Motor neuron (in vitro differentiated cells): ENCODE measurements at regions of chr12 and their contacts with region 1.

Region 1: GRCh38 chr12:55619354-55620138 is 17.1 kb upstream of the OR10P1 start:
- ATAC-seq: peak; percentile 94 to 99 (median 98)
- H3K4me3 ChIP-seq: no peak overlapping the region
- H3K27ac ChIP-seq: no peak overlapping the region
- H3K4me1 ChIP-seq: no peaks in the 10 kb centered on the region

Region 2: GRCh38 chr12:55188974-55189556 is 430.5 kb before region 1 on chr12:
- in situ Hi-C with region 1: loop called in 5 of 9 experiments (anchors 10 to 25 kb)
- ATAC-seq: peak; percentile 57 to 92 (median 75)
- H3K4me3 ChIP-seq: no peak overlapping the region
- H3K27ac ChIP-seq: no peak overlapping the region
- H3K4me1 ChIP-seq: no peaks in the 10 kb centered on the region

Region 3: DNA sequence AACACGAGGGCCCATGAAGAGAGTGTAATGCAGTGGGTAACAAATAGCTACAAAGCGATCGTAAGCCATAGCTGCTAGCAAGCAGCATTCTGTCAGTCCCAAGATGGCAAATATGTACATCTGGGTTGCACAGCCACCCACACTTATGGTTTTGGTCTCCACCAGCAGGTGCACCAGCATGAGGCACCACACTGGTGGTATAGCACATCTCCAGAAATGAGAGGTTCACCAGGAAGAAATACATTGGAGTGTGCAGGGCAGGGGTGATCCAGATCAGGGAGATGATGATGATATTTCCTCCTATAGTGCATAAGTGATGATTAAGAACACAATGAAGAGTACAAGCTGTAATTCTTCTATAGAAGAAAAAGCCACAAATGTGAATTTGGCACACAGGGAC is 425.2 kb before region 1 on chr12:
- in situ Hi-C with region 1: loop called in 5 of 9 experiments (anchors 10 to 25 kb)
- ATAC-seq: no peak
- H3K4me3 ChIP-seq: no peak overlapping the region
- H3K27ac ChIP-seq: no peak overlapping the region
- H3K4me1 ChIP-seq: no peaks in the 10 kb centered on the region

Region 4: DNA sequence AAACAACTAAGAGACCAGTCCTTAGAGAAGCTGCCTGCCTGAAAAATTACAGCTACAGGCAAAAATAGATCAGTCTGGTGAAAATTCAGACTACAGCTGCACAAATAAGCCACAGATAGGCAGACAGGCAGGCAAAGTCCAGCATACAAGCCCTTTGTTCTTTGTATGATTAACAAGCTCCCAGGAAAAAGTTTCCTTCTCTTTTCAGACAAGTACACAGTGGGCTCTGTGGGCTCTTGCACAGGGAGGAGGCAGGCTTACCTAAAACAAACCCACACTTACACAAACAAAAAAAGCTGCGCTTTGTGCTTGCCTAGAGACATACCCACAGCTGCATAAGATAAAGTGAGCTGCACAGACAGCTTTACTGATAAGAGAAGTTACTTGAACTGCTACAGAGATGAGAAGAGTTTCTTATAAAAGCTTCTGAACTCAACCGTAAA is 119.7 kb before region 1 on chr12:
- in situ Hi-C with region 1: no loop called
- ATAC-seq: peak in 6 of 8 experiments; percentile 23 to 85 (median 55)
- H3K4me3 ChIP-seq: no peak overlapping the region
- H3K27ac ChIP-seq: no peak overlapping the region
- H3K4me1 ChIP-seq: no peaks in the 10 kb centered on the region